GM18951 (cell line): ENCODE measurements at regions of chr17 and their contacts with region 1.

Region 1: GRCh38 chr17:76296186-76296585 is 11.9 kb downstream of the QRICH2 start:
- POLR2A ChIP-seq: no peak

Region 2: GRCh38 chr17:76014184-76014924 is 281.8 kb before region 1 on chr17:
- in situ Hi-C with region 1: loop called (anchors 10 kb)
- POLR2A ChIP-seq: no peak

Region 3: GRCh38 chr17:77049440-77049839 is 753.3 kb after region 1 on chr17:
- in situ Hi-C with region 1: no loop called
- POLR2A ChIP-seq: no peak